Activated CD4-positive, alpha-beta T cell treated with anti-CD3 and anti-CD28 coated beads, Interleukin-2, amount 10 ng/mL, durations not matched to agents 24 days and 14 days (primary cell): ENCODE measurements at regions of chr12 and their contacts with region 1.

Region 1: GRCh38 chr12:64796208-64796845 is 28.1 kb upstream of the TBC1D30 start:
- DNase-seq: peak; percentile 89
- H3K4me3 Mint-ChIP-seq: no peak overlapping the region
- H3K27ac Mint-ChIP-seq: no peak overlapping the region
- H3K4me1 Mint-ChIP-seq: no peaks in the 10 kb centered on the region
- H3K27me3 Mint-ChIP-seq: peaks cover 28% of the 10 kb centered on the region

Region 2: DNA sequence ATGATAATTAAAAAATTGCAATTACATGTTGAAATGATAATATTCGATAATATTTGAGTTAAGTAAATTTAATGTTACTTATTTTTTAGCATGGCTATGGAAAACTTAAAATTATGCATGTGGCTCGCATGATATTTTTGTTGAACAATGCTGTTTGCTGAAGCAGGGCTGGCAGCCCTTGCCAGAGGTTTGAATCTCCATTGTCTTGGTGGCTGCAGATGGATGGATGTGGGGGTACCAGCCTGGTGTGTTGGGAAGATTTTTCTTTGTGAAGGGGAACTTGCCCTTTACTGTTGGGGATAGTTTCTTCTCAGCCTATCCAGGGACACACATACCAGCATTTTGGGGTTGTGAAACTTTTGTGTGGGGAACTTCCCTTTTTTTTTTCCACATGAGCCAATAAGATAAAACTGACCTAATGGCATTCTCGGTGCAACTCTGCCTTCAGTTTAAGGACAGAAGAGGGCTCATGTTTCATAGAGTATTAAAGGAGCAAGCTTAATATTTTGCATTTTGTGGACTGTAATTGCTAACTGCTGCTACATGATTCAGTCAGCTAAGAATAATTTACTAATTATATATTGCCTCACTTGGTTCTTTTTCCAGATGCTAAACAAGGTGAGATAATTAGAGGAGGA is 177.3 kb before region 1 on chr12:
- intact Hi-C with region 1: no loop called
- DNase-seq: no peak
- H3K4me3 Mint-ChIP-seq: no peak overlapping the region
- H3K27ac Mint-ChIP-seq: no peak overlapping the region
- H3K4me1 Mint-ChIP-seq: peaks cover 36% of the 10 kb centered on the region
- H3K27me3 Mint-ChIP-seq: no peaks in the 10 kb centered on the region

Region 3: GRCh38 chr12:65121049-65121955 is 325.0 kb after region 1 on chr12 and contains the start of gene WIF1:
- intact Hi-C with region 1: loop called (anchors 1 kb)
- DNase-seq: peak; percentile 71
- H3K4me3 Mint-ChIP-seq: peak within 1 kb of the TSS; percentile 53
- H3K27ac Mint-ChIP-seq: no peak within 1 kb of the TSS
- H3K4me1 Mint-ChIP-seq: peaks cover 4% of the 10 kb centered on the region
- H3K27me3 Mint-ChIP-seq: peaks cover 50% of the 10 kb centered on the region
- total RNA-seq, gene WIF1: not detected in 2 replicates